ENCODE measurements at regions of chr1 and their contacts with region 1.

Region 1: GRCh38 chr1:30718636-30719405 is 4.6 kb downstream of the MATN1 start:
- DNase-seq: peak; percentile 94

Region 2: GRCh38 chr1:29230553-29231378 is 1488.1 kb before region 1 on chr1 and contains the start of gene MECR:
- in situ Hi-C with region 1: loop called (anchors 25 kb)
- DNase-seq: peak; percentile 95

Region 3: DNA sequence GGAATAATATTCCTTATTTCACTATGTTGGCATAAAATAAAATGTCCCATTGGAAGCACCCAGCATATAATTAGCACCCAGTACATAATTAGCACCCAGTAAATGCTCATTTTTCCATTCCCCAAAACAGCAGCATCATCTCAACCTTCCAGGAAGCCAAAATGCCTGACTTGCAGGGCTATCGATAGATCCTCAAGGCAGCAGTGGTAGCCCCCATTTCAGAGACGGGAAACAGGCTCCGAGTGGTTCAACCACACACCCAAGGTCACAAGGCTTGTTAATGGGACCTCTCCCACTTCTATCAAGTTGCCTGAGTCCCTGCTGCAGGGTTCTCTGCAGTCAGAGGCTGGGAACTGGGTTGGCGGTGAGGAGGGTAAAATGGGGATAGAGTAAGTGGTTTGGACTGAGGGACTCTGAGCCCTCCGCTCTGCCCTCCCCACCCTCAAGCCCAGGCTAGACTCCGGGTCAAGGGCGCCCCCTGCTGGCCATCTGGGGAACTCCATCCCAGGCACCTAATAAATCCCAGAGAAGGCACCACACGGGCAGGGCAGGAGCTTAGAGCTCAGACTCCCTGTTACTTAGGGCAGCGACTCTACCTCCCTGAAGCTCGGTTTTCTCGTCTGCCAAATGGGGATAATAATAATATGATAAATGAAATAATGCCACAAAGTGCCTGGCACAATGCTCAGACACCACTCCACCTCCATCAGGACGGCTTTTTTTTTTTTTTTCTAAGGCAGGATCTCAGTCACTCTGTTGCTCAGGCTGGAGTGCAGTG is 60.7 kb after region 1 on chr1:
- in situ Hi-C with region 1: loop called (anchors 5 kb)
- DNase-seq: peak; percentile 94

Region 4: GRCh38 chr1:30911046-30911954 is 192.5 kb after region 1 on chr1:
- in situ Hi-C with region 1: loop called (anchors 10 kb)
- DNase-seq: peak; percentile 76